CD8-positive, alpha-beta T cell (primary cell): ENCODE measurements at regions of chr1 and their contacts with region 1.

Region 1: DNA sequence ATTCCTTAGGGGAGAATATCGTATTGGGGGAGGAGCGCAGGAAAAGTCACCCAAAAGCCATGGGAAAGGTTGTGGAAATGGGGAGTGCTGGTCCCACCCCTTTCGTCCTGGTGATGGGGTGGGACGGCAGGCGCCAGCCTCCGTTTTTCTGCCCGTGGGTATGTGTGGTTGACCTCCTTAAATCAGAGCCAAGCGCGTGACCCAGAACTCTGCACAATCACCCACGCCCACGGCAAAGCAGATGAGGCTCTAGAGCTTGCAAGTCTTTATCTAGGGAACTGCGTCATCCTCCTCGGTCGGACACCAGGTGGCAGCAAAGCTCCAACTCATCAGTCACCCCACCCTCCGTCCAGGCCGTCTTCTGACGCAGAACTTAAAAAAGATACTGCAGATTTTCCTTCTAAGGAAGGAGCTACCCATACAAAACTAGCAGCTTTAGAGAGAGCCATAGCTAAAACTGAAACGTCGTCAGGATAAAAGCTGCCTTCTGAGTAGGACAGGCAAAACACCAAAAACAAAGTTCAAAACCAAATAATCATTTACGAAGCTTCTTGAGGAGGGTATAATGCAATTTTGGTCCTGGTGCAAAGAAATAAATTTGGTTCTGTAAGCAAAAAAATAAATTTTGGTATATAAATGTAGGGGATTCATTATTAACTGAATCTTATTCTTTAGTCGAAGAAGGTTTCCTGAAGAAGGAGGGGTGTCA is 62.0 kb downstream of the TBX19 start:
- DNase-seq: peak; percentile 79 to 95 (median 88)
- ATAC-seq: peak; percentile 99
- H3K4me3 ChIP-seq: no peak overlapping the region
- H3K4me3 Mint-ChIP-seq: peak overlapping the region; percentile 54
- H3K27ac ChIP-seq: peak overlapping the region in 1 of 2 experiments; percentile 48
- H3K27ac Mint-ChIP-seq: peak overlapping the region; percentile 92
- H3K4me1 ChIP-seq: peaks cover 19% of the 10 kb centered on the region
- H3K4me1 Mint-ChIP-seq: peaks cover 32% of the 10 kb centered on the region
- H3K27me3 ChIP-seq: no peaks in the 10 kb centered on the region
- H3K27me3 Mint-ChIP-seq: no peaks in the 10 kb centered on the region
- CTCF ChIP-seq: peak; percentile 71

Region 2: DNA sequence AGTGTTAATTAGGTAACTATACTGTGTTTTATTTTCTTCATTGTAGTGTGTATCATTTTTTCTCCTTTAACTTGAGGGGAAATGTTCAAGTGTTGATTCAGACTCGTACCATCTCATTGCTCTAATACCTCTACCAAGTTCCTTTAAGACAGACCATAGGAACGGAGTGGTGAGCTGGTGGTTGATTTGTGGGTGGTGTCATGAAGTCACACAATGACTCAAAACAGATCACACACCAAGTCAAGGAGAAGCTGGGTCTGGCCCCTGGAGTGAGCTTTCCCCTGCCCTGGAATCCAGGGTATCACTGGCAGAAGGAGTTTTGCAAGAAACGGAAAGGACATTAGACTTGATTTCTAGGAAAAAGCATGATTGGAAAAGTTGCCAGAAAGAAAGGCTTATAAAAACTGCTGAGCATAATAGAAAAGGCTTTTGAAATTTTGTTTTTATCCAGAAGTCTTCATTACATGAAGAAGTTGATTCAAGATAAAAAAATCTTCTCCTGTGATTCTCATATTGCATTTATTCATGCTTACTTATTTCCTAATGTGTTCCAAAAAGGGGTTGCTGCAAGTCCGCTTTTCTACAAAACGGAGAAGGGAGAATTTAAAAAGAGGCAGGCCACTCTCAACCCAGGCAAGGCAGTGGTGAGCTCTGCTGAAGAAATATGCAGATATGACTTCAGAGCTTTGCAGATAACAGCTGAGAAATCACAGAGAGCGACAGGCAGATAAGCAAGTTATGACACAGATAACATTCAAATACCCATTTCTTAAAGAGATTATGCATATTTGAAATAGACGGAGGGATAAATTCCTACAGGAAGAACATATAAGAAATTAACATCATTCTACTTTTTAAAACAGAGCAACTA is 17.7 kb after region 1 on chr1:
- CTCF ChIA-PET with region 1: interaction called, 108 read pairs
- POLR2A ChIA-PET with region 1: interaction called, 13 read pairs
- intact Hi-C with region 1: loop called (anchors 1 kb)
- DNase-seq: peak in 3 of 9 experiments; percentile 14 to 52 (median 46)
- ATAC-seq: no peak
- H3K4me3 ChIP-seq: no peak overlapping the region
- H3K4me3 Mint-ChIP-seq: no peak overlapping the region
- H3K27ac ChIP-seq: no peak overlapping the region
- H3K27ac Mint-ChIP-seq: no peak overlapping the region
- H3K4me1 ChIP-seq: peaks cover 24% of the 10 kb centered on the region
- H3K4me1 Mint-ChIP-seq: peaks cover 33% of the 10 kb centered on the region
- H3K27me3 ChIP-seq: no peaks in the 10 kb centered on the region
- H3K27me3 Mint-ChIP-seq: no peaks in the 10 kb centered on the region
- CTCF ChIP-seq: no peak

Region 3: GRCh38 chr1:168421399-168422004 is 78.8 kb after region 1 on chr1:
- CTCF ChIA-PET with region 1: interaction called, 11 read pairs
- POLR2A ChIA-PET with region 1: interaction called, 3 read pairs
- intact Hi-C with region 1: loop called (anchors 5 kb)
- DNase-seq: peak in 4 of 9 experiments; percentile 25 to 79 (median 51)
- ATAC-seq: peak; percentile 87
- H3K4me3 ChIP-seq: no peak overlapping the region
- H3K4me3 Mint-ChIP-seq: peak overlapping the region; percentile 10
- H3K27ac ChIP-seq: peak overlapping the region in 1 of 2 experiments; percentile 63
- H3K27ac Mint-ChIP-seq: peak overlapping the region; percentile 75
- H3K4me1 ChIP-seq: peaks cover 14% of the 10 kb centered on the region
- H3K4me1 Mint-ChIP-seq: peaks cover 34% of the 10 kb centered on the region
- H3K27me3 ChIP-seq: no peaks in the 10 kb centered on the region
- H3K27me3 Mint-ChIP-seq: no peaks in the 10 kb centered on the region
- CTCF ChIP-seq: no peak

Region 4: DNA sequence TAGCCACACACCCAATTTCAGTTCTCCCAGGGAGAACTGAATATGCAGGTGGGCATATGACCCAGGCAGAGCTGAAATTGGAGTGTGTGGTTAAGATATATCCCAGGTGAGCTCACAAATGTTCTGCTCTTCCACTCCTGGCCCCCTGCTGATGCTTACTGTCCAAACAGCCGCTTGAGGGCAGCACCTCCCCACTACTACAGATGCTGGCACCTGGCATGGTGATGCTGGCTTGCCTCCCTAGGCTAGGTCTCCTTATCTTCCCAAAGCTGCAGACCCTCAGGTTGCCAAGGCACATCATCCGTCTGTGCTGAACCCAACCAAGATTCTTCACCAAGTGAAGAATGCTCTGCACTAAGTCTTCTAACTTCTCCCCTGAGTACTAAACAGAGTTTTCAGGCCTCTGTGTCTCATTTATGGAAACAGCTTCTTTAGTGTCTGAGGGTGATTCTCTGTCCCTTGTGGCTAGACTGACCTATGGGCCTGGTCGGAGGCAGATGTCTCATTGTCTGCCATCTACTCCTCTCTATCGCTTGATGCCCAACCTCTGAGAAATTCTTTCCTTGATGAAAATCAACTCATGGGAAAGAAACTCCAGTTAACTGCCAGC is 260.9 kb after region 1 on chr1:
- CTCF ChIA-PET with region 1: interaction called, 28 read pairs
- POLR2A ChIA-PET with region 1: interaction called, 6 read pairs
- intact Hi-C with region 1: loop called in 1 of 2 experiments (anchors 2 kb)
- DNase-seq: peak; percentile 38 to 78 (median 68)
- ATAC-seq: peak; percentile 67
- H3K4me3 ChIP-seq: no peak overlapping the region
- H3K4me3 Mint-ChIP-seq: no peak overlapping the region
- H3K27ac ChIP-seq: no peak overlapping the region
- H3K27ac Mint-ChIP-seq: no peak overlapping the region
- H3K4me1 ChIP-seq: no peaks in the 10 kb centered on the region
- H3K4me1 Mint-ChIP-seq: no peaks in the 10 kb centered on the region
- H3K27me3 ChIP-seq: no peaks in the 10 kb centered on the region
- H3K27me3 Mint-ChIP-seq: no peaks in the 10 kb centered on the region
- CTCF ChIP-seq: peak; percentile 63

Region 5: DNA sequence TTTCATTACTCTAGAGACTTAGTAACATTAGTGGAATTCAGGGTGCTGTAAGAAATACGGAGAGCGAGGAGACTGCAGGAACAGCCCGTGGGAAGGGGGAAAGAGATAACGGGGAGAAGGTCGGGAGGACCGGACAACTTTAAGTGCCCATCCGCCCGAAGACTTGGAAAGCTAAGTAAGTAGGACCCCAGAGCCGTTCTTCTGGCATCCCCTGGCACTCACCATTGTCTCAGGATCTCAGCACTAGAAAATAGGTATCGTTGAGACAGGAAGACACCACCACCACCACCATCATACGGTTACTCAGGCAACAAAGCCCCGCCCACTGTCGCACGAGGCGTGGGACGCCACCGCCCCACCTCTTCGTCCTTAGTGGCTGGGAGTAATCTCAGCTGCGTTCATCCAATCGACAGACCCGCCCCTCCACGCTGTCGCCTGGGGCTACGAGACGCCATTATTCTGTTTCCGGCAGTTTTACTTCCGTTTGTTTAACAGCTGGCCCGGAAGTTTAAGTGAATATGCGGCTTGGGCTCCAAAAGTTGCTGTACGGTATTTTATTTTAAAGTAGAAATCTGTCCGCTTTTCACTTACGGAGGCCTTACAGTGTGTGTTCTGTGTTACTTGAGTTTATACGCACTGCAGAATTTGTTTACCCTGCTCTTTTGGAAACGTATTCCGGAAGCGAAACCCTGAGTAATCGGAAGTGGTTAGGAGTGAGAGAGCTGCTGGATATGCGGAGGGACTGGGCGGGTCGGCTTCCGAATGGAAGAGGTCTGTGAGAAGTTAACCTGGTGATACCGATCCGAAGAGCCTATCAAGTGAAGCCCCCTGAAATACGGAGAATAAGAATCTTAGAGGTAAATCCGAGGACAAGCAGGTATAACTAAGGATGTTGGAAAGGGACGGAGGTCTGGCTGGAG is 1025.0 kb after region 1 on chr1 and contains the starts of genes BLZF1 and NME7:
- CTCF ChIA-PET with region 1: interaction called, 5 read pairs
- POLR2A ChIA-PET with region 1: interaction called, 6 read pairs
- intact Hi-C with region 1: loop called (anchors 5 kb)
- DNase-seq: peak; percentile 96 to 99 (median 98)
- ATAC-seq: peak; percentile 93
- H3K4me3 ChIP-seq: peak within 1 kb of the TSS; percentile 84 to 94
- H3K4me3 Mint-ChIP-seq: peak within 1 kb of the TSS; percentile 51
- H3K27ac ChIP-seq: peak within 1 kb of the TSS; percentile 88 to 97
- H3K27ac Mint-ChIP-seq: peak within 1 kb of the TSS; percentile 32
- H3K4me1 ChIP-seq: peaks cover 23% of the 10 kb centered on the region
- H3K4me1 Mint-ChIP-seq: peaks cover 49% of the 10 kb centered on the region
- H3K27me3 ChIP-seq: no peaks in the 10 kb centered on the region
- H3K27me3 Mint-ChIP-seq: no peaks in the 10 kb centered on the region
- CTCF ChIP-seq: no peak
- total RNA-seq, gene BLZF1: 11.1 to 13.6 TPM
- total RNA-seq, gene NME7: 5.3 to 7.7 TPM

Region 6: GRCh38 chr1:169809370-169810095 is 1466.8 kb after region 1 on chr1:
- CTCF ChIA-PET with region 1: no interaction called
- POLR2A ChIA-PET with region 1: no interaction called
- intact Hi-C with region 1: loop called in 1 of 2 experiments (anchors 5 kb)
- DNase-seq: peak in 3 of 9 experiments; percentile 34 to 59 (median 52)
- ATAC-seq: no peak
- H3K4me3 ChIP-seq: no peak overlapping the region
- H3K4me3 Mint-ChIP-seq: no peak overlapping the region
- H3K27ac ChIP-seq: no peak overlapping the region
- H3K27ac Mint-ChIP-seq: no peak overlapping the region
- H3K4me1 ChIP-seq: no peaks in the 10 kb centered on the region
- H3K4me1 Mint-ChIP-seq: peaks cover 2% of the 10 kb centered on the region
- H3K27me3 ChIP-seq: no peaks in the 10 kb centered on the region
- H3K27me3 Mint-ChIP-seq: no peaks in the 10 kb centered on the region
- CTCF ChIP-seq: peak; percentile 71